ENCODE measurements at regions of chr11 and their contacts with region 1.

Region 1: GRCh38 chr11:36746886-36747710 is 149.1 kb upstream of the RAG2 start:
- DNase-seq: peak; percentile 71
- CTCF ChIP-seq: peak; percentile 98

Region 2: DNA sequence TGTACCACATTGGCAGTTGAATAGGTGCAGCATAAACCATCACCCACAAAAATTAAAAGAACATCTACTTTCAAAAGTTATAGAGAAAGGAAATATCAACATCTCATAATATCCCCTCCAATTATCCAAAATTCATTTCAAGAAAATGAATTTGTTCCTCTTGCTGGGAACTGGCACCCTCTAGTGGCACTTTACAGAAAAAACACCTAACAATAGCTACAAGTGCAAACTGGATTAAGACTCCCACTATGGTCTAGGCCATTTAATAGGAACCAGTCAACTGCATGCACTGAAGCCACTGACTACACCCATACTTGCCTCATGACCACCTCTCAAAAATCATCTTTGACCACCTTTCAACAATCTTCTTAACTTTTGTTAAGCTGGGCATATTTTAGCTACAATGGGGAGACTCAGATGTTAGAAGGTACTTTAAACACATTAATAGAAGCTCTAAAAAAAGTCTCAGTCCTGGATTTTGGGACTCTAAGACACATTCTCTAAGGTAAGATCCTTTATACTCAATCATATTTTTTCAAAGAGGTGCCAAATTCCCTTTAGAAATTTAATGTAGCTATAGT is 254.3 kb before region 1 on chr11:
- CTCF ChIA-PET with region 1: interaction called, 18 read pairs
- POLR2A ChIA-PET with region 1: no interaction called
- DNase-seq: peak; percentile 45
- CTCF ChIP-seq: peak; percentile 69

Region 3: GRCh38 chr11:36564376-36565030 is 182.6 kb before region 1 on chr11:
- CTCF ChIA-PET with region 1: interaction called, 340 read pairs
- POLR2A ChIA-PET with region 1: interaction called, 3 read pairs
- DNase-seq: peak; percentile 34
- CTCF ChIP-seq: peak; percentile 70

Region 4: DNA sequence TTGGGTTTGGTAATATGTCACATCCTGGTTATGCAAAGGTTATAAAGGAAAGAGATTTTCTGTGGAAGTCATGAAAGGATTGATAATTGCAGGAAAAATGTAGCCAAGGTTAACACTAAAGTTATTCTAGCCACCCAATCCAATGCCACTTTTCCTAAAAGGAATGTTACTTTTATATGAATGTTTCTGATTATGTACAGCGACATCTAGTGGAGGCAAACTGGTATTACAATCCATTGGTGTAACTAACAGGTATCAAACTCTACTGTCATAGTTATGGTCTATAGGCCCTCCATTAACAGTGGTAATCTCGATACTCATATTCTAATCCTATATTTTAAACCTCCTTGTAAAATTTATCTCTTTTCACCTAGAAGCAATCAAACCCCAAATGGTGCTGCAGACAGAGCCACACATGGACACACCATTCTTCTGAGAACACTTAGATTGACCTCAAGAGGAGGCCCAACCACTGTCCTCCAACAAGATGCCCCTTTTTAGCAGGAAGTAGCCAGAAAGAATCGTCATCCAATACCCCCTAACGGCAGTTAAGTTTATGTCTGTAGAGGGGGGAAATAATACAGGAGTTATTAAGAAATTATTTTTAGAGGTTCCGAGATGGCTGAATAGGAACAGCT is 74.2 kb before region 1 on chr11:
- CTCF ChIA-PET with region 1: interaction called, 26 read pairs
- POLR2A ChIA-PET with region 1: no interaction called
- DNase-seq: no peak
- CTCF ChIP-seq: peak; percentile 76

Region 5: GRCh38 chr11:36724742-36725385 is 22.2 kb before region 1 on chr11:
- CTCF ChIA-PET with region 1: interaction called, 349 read pairs
- POLR2A ChIA-PET with region 1: no interaction called
- DNase-seq: peak; percentile 22
- CTCF ChIP-seq: no peak

Region 6: GRCh38 chr11:37817727-37818270 is 1070.7 kb after region 1 on chr11:
- CTCF ChIA-PET with region 1: no interaction called
- POLR2A ChIA-PET with region 1: no interaction called
- DNase-seq: no peak
- CTCF ChIP-seq: no peak

Measured in GM10248 (cell line).